ENCODE measurements at regions of chr10 and their contacts with region 1.

Region 1: DNA sequence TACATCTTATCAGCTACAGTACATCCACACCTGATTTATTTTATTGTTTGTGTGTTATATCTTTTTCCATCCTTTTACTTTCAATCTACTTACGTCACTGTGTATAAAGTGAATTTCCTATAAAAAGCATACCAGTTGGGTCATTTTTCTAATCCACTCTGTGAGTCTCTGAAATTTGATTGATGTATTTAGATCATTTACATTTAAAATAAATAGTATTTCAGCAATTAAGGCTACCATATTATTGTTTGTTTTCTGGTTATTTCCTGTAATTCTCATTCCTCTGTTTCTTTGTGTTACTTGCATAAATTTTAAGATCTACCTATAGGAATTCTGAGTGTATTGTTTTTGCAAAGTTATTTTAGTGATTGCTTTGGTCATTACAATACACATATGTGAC is 53.7 kb downstream of the VSTM4 start:
- DNase-seq: no peak
- H3K4me3 ChIP-seq: no peak overlapping the region
- H3K27ac ChIP-seq: no peak overlapping the region
- H3K4me1 ChIP-seq: no peaks in the 10 kb centered on the region
- H3K27me3 ChIP-seq: peaks cover 3% of the 10 kb centered on the region
- CTCF ChIP-seq: no peak

Region 2: GRCh38 chr10:49157229-49157628 is 95.6 kb after region 1 on chr10:
- CTCF ChIA-PET with region 1: no interaction called
- dilution Hi-C with region 1: loop called (anchors 5 kb)
- in situ Hi-C with region 1: no loop called
- intact Hi-C with region 1: no loop called
- DNase-seq: no peak
- H3K4me3 ChIP-seq: no peak overlapping the region
- H3K27ac ChIP-seq: no peak overlapping the region
- H3K4me1 ChIP-seq: no peaks in the 10 kb centered on the region
- H3K27me3 ChIP-seq: no peaks in the 10 kb centered on the region
- CTCF ChIP-seq: no peak

Region 3: GRCh38 chr10:49324711-49325110 is 263.0 kb after region 1 on chr10:
- CTCF ChIA-PET with region 1: no interaction called
- dilution Hi-C with region 1: no loop called
- in situ Hi-C with region 1: no loop called
- intact Hi-C with region 1: no loop called
- DNase-seq: no peak
- H3K4me3 ChIP-seq: no peak overlapping the region
- H3K27ac ChIP-seq: no peak overlapping the region
- H3K4me1 ChIP-seq: no peaks in the 10 kb centered on the region
- H3K27me3 ChIP-seq: no peaks in the 10 kb centered on the region
- CTCF ChIP-seq: no peak

Measured in mammary epithelial cell (primary cell).